ENCODE measurements at regions of chr17 and their contacts with region 1.

Region 1: DNA sequence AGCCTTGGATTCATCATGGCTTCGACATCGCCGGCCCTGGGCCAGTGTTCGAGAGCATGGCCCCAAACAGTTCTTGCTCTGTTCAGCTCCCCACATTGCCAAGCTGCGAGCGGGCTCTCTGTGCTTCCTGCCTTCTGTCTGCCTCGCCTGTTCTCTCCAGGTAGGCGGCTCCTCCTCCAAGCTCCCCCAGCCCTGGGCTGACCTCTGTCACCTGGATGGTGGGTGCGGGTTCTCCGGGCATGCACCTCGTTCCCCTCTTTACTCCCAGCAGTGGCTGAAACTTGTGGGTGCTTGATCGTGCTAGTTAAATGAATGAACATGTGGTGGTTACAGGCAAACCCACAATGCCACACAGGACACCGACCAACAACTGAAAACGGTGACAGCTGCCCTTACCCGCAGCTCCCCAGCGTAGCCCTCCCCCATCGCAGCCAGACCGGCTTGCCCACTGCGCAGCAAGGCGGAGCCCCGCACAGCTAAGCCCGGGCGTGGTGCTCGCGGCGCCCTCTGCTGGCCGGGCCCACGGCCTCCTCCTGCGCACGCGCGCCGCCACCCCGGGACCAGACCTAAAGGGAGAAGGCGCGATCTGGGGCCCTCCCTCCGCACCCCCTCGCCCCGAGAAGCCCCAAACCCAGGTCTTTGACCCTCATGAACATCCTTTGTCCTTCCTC is 23.0 kb upstream of the EIF1 start:
- DNase-seq: peak; percentile 81 to 96 (median 90)
- ATAC-seq: peak; percentile 87
- H3K4me3 ChIP-seq: peak overlapping the region; percentile 87
- H3K4me3 Mint-ChIP-seq: peak overlapping the region; percentile 85 to 95 (median 92)
- H3K27ac ChIP-seq: peak overlapping the region; percentile 97
- H3K27ac Mint-ChIP-seq: peak overlapping the region; percentile 88 to 100 (median 96)
- H3K4me1 ChIP-seq: peaks cover 4 to 7% of the 10 kb centered on the region in 2 donors
- H3K4me1 Mint-ChIP-seq: peaks cover 17 to 54% (median 21%) of the 10 kb centered on the region in 7 donors
- H3K27me3 ChIP-seq: no peaks in the 10 kb centered on the region
- H3K27me3 Mint-ChIP-seq: peaks cover 0 to 13% (median 0%) of the 10 kb centered on the region in 5 donors

Region 2: DNA sequence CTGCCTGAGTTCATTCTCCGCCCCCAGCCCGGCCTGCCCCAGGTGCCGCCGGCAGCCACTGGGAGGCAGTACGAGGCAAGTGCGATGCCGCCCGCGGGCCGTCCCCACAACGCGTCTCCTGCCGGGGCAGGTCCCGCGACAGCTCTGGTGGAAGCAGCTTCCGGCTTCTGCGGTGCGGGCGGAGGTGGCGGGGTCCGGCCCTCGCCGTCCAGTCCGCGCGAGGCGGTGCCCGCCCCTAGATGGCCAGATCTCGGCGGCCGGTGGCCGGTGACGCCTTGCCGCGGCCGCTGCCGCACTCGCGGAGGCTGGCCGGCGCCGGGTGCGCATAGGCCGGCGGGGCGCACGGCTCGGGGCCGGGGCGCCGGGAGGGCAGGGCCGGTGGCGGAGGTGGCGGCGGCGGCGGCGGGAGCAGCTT is 1303.0 kb before region 1 on chr17:
- CTCF ChIA-PET with region 1: no interaction called
- POLR2A ChIA-PET with region 1: interaction called, 3 read pairs
- intact Hi-C with region 1: loop called in 1 of 2 experiments (anchors 2 kb)
- DNase-seq: peak; percentile 60 to 90 (median 74)
- ATAC-seq: peak; percentile 88
- H3K4me3 ChIP-seq: peak overlapping the region; percentile 35
- H3K4me3 Mint-ChIP-seq: peak overlapping the region; percentile 10 to 87 (median 70)
- H3K27ac ChIP-seq: no peak overlapping the region
- H3K27ac Mint-ChIP-seq: peak overlapping the region in 1 of 9 donors; percentile 85
- H3K4me1 ChIP-seq: peaks cover 4 to 7% of the 10 kb centered on the region in 2 donors
- H3K4me1 Mint-ChIP-seq: peaks cover 4 to 37% (median 12%) of the 10 kb centered on the region in 7 donors
- H3K27me3 ChIP-seq: no peaks in the 10 kb centered on the region
- H3K27me3 Mint-ChIP-seq: peaks cover 0 to 23% (median 8%) of the 10 kb centered on the region in 5 donors

Region 3: GRCh38 chr17:40818733-40819527 is 846.8 kb before region 1 on chr17:
- CTCF ChIA-PET with region 1: interaction called, 8 read pairs
- POLR2A ChIA-PET with region 1: interaction called, 12 read pairs
- intact Hi-C with region 1: loop called (anchors 1 to 5 kb)
- DNase-seq: peak; percentile 74 to 89 (median 84)
- ATAC-seq: peak; percentile 92
- H3K4me3 ChIP-seq: peak overlapping the region; percentile 70
- H3K4me3 Mint-ChIP-seq: peak overlapping the region; percentile 84 to 98 (median 94)
- H3K27ac ChIP-seq: peak overlapping the region; percentile 76
- H3K27ac Mint-ChIP-seq: peak overlapping the region; percentile 93 to 99 (median 96)
- H3K4me1 ChIP-seq: peaks cover 9 to 13% of the 10 kb centered on the region in 2 donors
- H3K4me1 Mint-ChIP-seq: peaks cover 11 to 38% (median 31%) of the 10 kb centered on the region in 7 donors
- H3K27me3 ChIP-seq: no peaks in the 10 kb centered on the region
- H3K27me3 Mint-ChIP-seq: peaks cover 4 to 23% (median 16%) of the 10 kb centered on the region in 5 donors

Region 4: GRCh38 chr17:41121742-41122141 is 544.0 kb before region 1 on chr17:
- CTCF ChIA-PET with region 1: interaction called, 3 read pairs
- POLR2A ChIA-PET with region 1: no interaction called
- intact Hi-C with region 1: loop called in 1 of 2 experiments (anchors 5 kb)
- DNase-seq: no peak
- ATAC-seq: no peak
- H3K4me3 ChIP-seq: no peak overlapping the region
- H3K4me3 Mint-ChIP-seq: peak overlapping the region in 1 of 10 donors; percentile 16
- H3K27ac ChIP-seq: no peak overlapping the region
- H3K27ac Mint-ChIP-seq: peak overlapping the region in 2 of 9 donors; percentile 28 to 45
- H3K4me1 ChIP-seq: peaks cover 26 to 43% of the 10 kb centered on the region in 2 donors
- H3K4me1 Mint-ChIP-seq: peaks cover 4 to 84% (median 70%) of the 10 kb centered on the region in 7 donors
- H3K27me3 ChIP-seq: no peaks in the 10 kb centered on the region
- H3K27me3 Mint-ChIP-seq: peaks cover 0 to 12% (median 0%) of the 10 kb centered on the region in 5 donors

Region 5: GRCh38 chr17:41486809-41487720 is 178.6 kb before region 1 on chr17:
- CTCF ChIA-PET with region 1: interaction called, 5 read pairs
- POLR2A ChIA-PET with region 1: no interaction called
- intact Hi-C with region 1: loop called in 1 of 2 experiments (anchors 1 kb)
- DNase-seq: peak in 1 of 9 donors; percentile 58
- ATAC-seq: no peak
- H3K4me3 ChIP-seq: no peak overlapping the region
- H3K4me3 Mint-ChIP-seq: no peak overlapping the region
- H3K27ac ChIP-seq: no peak overlapping the region
- H3K27ac Mint-ChIP-seq: no peak overlapping the region
- H3K4me1 ChIP-seq: peaks cover 5% of the 10 kb centered on the region in 2 donors
- H3K4me1 Mint-ChIP-seq: peaks cover 0 to 12% (median 11%) of the 10 kb centered on the region in 7 donors
- H3K27me3 ChIP-seq: no peaks in the 10 kb centered on the region
- H3K27me3 Mint-ChIP-seq: peaks cover 0 to 2% (median 0%) of the 10 kb centered on the region in 5 donors

Region 6: DNA sequence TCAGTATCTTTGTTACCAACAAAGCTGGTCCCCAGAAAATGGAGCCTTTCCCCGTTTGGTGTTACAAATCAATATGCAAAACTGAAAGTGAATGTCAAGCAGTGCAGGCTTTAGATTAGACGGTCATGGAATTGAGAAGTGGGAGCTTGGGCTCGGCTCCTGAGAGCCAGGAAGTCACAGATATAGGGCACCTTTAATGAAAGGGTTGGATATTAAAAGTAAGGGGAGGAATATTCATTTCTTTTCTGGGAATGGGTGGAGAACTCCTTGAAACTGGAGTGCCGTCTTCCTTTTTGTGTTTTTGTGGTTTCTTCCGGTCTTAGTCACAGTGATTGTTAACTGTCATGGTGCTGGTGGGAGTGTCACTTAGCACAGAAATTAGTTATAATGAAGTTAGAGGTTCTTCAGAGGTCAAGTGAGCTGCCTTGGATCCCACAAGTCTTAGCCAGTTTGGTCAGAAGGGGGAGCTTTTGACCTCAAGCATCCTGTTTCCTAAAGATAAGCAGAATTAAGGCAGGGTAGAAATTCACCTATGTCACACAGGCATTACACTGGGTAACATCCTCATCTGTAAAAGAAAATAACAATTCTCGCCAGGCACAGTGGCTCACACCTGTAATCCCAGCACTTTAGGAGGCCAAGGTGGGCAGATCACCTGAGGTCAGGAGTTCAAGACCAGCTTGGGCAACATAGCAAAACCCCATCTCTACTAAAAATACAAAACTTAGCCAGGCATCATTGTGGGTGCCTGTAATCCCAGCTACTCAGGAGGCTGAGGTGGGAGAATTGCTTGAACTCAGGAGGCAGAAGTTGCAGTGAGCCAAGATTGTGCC is 13.4 kb after region 1 on chr17:
- CTCF ChIA-PET with region 1: interaction called, 15 read pairs
- POLR2A ChIA-PET with region 1: interaction called, 54 read pairs
- intact Hi-C with region 1: loop called (anchors 1 kb)
- DNase-seq: peak in 8 of 9 donors; percentile 49 to 72 (median 57)
- ATAC-seq: peak; percentile 93
- H3K4me3 ChIP-seq: peak overlapping the region; percentile 56
- H3K4me3 Mint-ChIP-seq: peak overlapping the region; percentile 75 to 93 (median 88)
- H3K27ac ChIP-seq: peak overlapping the region; percentile 76
- H3K27ac Mint-ChIP-seq: peak overlapping the region; percentile 94 to 98 (median 97)
- H3K4me1 ChIP-seq: peaks cover 14 to 18% of the 10 kb centered on the region in 2 donors
- H3K4me1 Mint-ChIP-seq: peaks cover 18 to 64% (median 28%) of the 10 kb centered on the region in 7 donors
- H3K27me3 ChIP-seq: no peaks in the 10 kb centered on the region
- H3K27me3 Mint-ChIP-seq: no peaks in the 10 kb centered on the region

Measured in naive thymus-derived CD4-positive, alpha-beta T cell (primary cell).